K562 (cell line): ENCODE measurements at regions of chr7 and their contacts with region 1.

Region 1: GRCh38 chr7:106260136-106260561 is 24.6 kb downstream of the NAMPT start:
- DNase-seq: no peak
- ATAC-seq: no peak
- H3K4me3 ChIP-seq: no peak overlapping the region
- H3K27ac ChIP-seq: no peak overlapping the region
- H3K4me1 ChIP-seq: no peaks in the 10 kb centered on the region
- H3K27me3 ChIP-seq: no peaks in the 10 kb centered on the region
- CTCF ChIP-seq: no peak
- EP300 ChIP-seq: no peak
- POLR2A ChIP-seq: no peak
- RAD21 ChIP-seq: no peak

Region 2: DNA sequence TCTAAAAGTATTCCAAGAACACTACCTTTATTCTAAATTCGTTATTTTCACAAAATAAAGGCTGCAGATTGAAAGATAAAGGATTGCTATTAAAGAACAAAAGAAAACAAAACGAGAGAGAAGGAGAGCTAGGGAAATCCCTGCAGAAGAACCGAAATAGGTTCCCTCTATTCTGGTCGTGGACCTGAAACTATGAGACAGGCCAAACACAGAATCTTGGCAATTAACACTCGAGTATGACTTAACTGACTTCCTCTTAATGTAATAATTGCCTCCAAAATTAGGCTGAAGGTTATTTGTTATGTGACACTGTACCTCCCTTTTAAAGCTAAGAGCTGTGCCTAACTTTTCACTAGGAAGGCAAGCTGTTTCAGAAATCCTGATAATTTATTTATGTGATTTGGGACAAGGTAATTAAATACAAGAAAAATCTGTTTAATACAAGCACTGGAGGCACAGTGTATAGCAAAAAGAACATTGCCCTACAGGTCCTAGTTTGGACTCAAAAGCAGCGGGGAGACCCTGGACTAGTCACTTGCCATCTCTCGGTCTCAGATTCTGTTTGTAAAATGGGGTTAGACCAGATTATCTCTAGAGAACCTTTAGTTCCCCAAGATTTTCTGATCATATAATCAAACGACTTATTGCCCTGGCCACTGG is 13.0 kb after region 1 on chr7:
- CTCF ChIA-PET with region 1: no interaction called
- POLR2A ChIA-PET with region 1: interaction called, 73 read pairs
- in situ Hi-C with region 1: no loop called
- intact Hi-C with region 1: no loop called
- DNase-seq: no peak
- ATAC-seq: no peak
- H3K4me3 ChIP-seq: no peak overlapping the region
- H3K27ac ChIP-seq: no peak overlapping the region
- H3K4me1 ChIP-seq: no peaks in the 10 kb centered on the region
- H3K27me3 ChIP-seq: no peaks in the 10 kb centered on the region
- CTCF ChIP-seq: no peak
- EP300 ChIP-seq: no peak
- POLR2A ChIP-seq: no peak
- RAD21 ChIP-seq: no peak